ENCODE measurements at regions of chr12 and their contacts with region 1.

Region 1: GRCh38 chr12:14664510-14664909 is 31.9 kb downstream of the GUCY2C start:
- DNase-seq: peak in 10 of 14 experiments; percentile 11 to 74 (median 28)
- ATAC-seq: peak; percentile 97
- H3K4me3 ChIP-seq: no peak overlapping the region
- H3K4me3 Mint-ChIP-seq: no peak overlapping the region
- H3K27ac ChIP-seq: no peak overlapping the region
- H3K27ac Mint-ChIP-seq: no peak overlapping the region
- H3K4me1 ChIP-seq: no peaks in the 10 kb centered on the region
- H3K4me1 Mint-ChIP-seq: peaks cover 5% of the 10 kb centered on the region
- H3K27me3 ChIP-seq: peaks cover 0 to 2% of the 10 kb centered on the region in 2 experiments
- H3K27me3 Mint-ChIP-seq: peaks cover 6% of the 10 kb centered on the region
- CTCF ChIP-seq: peak; percentile 77

Region 2: DNA sequence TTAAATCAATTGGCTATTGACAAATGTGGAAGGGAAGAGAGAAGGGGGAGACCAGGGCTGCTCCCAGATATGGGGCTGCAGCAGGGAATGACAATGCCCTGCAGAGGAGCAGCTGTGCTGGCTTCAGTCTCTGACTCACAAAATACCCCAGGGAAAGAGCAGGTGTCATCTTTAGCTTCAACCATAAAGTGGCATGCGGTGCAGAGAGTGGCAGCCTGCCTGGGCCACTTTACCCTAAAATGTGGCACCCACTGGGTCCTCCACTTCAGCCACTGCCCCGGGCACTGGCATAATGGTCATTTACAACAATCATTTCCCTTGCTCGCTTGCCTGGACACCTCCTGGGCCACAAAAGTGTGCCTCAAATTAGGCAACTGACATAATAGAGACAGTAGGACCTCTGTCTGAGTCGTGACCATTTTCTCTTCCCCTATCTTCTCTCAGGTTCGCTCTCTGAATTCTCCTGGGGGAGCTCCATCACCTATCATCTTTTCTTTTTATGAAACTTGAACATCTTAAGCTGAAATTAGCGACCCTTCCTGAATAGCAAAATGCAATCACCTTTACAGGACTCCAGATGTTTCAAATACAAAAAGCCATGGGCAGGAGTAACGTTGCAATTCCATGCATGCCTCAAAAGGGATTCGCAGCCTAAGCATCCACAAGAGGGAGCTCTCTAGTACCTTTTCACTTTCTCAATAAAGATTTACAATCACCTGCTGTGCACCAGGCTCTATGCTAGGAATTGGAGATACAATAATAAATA is 478.9 kb before region 1 on chr12:
- CTCF ChIA-PET with region 1: interaction called, 3 read pairs
- POLR2A ChIA-PET with region 1: no interaction called
- intact Hi-C with region 1: loop called in 1 of 2 experiments (anchors 5 kb)
- DNase-seq: peak in 6 of 14 experiments; percentile 2 to 52 (median 29)
- ATAC-seq: no peak
- H3K4me3 ChIP-seq: no peak overlapping the region
- H3K4me3 Mint-ChIP-seq: no peak overlapping the region
- H3K27ac ChIP-seq: no peak overlapping the region
- H3K27ac Mint-ChIP-seq: no peak overlapping the region
- H3K4me1 ChIP-seq: no peaks in the 10 kb centered on the region
- H3K4me1 Mint-ChIP-seq: no peaks in the 10 kb centered on the region
- H3K27me3 ChIP-seq: no peaks in the 10 kb centered on the region
- H3K27me3 Mint-ChIP-seq: peaks cover 6% of the 10 kb centered on the region
- CTCF ChIP-seq: peak; percentile 52

Region 3: DNA sequence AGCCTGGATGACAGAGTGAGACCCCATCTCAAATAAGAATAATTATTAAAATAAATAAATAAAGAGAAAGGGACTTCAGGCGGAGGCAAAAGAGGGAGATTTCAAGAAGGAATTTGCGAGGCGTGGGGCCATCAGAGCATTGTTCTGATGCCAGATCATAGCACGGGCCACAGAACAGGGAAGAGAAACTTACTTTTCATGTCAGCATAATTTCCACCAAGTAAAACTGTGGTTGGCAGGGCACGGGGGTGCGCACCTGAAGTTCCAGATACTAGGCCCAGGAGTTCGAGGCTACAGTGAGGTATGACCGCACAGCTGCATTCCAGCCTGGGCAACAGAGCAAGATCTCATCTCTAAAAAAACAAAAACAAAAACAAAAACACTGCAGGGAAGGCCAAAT is 85.9 kb before region 1 on chr12:
- CTCF ChIA-PET with region 1: no interaction called
- POLR2A ChIA-PET with region 1: no interaction called
- intact Hi-C with region 1: no loop called
- DNase-seq: no peak
- ATAC-seq: no peak
- H3K4me3 ChIP-seq: no peak overlapping the region
- H3K4me3 Mint-ChIP-seq: no peak overlapping the region
- H3K27ac ChIP-seq: no peak overlapping the region
- H3K27ac Mint-ChIP-seq: no peak overlapping the region
- H3K4me1 ChIP-seq: peaks cover 13% of the 10 kb centered on the region
- H3K4me1 Mint-ChIP-seq: peaks cover 27% of the 10 kb centered on the region
- H3K27me3 ChIP-seq: no peaks in the 10 kb centered on the region
- H3K27me3 Mint-ChIP-seq: peaks cover 4% of the 10 kb centered on the region
- CTCF ChIP-seq: no peak

Measured in CD4-positive, alpha-beta T cell (primary cell).